ENCODE measurements at regions of chr19 and their contacts with region 1.

Region 1: DNA sequence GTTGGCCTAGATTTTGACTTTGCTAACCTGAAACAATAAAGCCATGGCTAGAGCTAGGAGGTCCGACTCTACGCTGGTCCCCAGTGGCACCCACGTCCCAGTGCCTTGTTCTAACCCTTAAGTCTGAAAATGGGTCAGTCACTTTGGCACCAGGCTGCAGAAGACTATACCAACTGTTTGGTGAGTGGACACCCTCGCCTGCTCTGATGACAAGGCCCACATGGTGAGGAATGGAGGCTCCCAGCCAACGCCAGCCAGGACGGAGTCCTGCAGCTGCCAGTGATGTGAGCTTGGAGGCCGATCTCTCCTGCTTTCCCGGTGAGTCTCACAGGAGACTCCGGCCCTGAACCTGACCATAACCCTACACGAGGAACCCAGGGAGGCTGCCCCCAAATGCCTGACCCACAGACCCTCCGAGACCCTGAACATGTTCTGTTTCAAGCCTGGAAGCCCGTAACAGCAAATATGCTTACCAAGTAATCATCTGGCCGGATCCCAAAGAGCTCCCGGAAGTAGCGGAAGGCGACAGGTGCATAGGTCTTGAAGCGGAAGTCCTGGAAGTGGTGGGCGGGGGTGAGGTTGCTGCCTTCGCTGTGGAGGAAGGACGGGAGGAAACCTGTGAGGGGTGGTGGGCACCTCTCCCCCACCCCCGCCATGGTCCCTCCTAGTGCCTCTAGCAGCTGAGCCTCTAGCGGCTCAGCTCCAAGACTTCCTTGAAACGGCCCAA is 34.1 kb upstream of the CACTIN start:
- DNase-seq: no peak
- H3K4me3 ChIP-seq: no peak overlapping the region
- H3K27ac ChIP-seq: no peak overlapping the region
- H3K4me1 ChIP-seq: peaks cover 0 to 2% of the 10 kb centered on the region in 2 donors
- H3K27me3 ChIP-seq: no peaks in the 10 kb centered on the region
- CTCF ChIP-seq: no peak
- POLR2A ChIP-seq: no peak

Region 2: DNA sequence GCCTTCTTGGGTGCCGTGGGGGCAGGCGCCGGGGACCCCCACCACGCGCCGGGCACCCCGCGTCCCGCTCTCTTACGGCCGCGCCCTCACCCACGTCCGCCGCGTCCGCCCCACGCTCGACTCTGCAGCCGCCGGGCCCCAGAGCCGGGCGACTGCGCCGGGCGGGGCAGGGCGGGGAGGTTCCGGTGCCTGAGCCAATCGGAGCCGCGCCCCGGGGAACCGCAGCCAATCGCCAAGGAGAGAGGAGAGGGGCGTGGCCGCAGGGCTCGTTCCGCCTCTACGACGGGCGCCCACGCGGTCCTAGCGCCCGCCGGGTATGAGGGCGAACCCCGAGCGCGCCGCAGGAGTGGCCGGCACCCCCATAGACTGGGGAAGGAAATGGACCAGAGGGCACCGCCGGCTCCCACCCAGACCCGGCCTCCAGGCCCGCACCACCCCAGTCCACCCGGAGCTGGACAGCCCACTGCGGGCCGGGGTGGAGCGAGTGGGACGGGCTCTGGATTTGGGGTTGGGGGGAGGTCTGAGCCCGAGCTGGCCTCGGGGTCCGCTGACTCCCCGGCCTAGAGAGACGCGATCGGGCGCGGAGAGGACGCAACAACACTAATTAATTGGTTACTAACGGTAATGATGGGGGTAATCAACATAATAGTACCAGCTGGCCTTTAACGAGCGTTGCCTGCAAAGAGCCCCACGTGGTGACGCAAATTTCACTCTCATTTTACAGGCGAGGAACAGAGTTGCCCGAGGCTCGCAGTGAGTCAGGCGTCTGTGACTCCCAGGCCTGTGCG is 103.0 kb before region 1 on chr19 and contains the start of gene MFSD12:
- intact Hi-C with region 1: no loop called
- DNase-seq: peak; percentile 95
- H3K4me3 ChIP-seq: peak within 1 kb of the TSS; percentile 74 to 86 (median 76)
- H3K27ac ChIP-seq: peak within 1 kb of the TSS; percentile 46 to 65 (median 55)
- H3K4me1 ChIP-seq: peaks cover 7 to 20% of the 10 kb centered on the region in 2 donors
- H3K27me3 ChIP-seq: no peaks in the 10 kb centered on the region
- CTCF ChIP-seq: no peak
- POLR2A ChIP-seq: peak in 1 of 2 donors; percentile 85
- total RNA-seq, gene MFSD12: 36.4 to 90.9 (median 66.7) TPM

Region 3: DNA sequence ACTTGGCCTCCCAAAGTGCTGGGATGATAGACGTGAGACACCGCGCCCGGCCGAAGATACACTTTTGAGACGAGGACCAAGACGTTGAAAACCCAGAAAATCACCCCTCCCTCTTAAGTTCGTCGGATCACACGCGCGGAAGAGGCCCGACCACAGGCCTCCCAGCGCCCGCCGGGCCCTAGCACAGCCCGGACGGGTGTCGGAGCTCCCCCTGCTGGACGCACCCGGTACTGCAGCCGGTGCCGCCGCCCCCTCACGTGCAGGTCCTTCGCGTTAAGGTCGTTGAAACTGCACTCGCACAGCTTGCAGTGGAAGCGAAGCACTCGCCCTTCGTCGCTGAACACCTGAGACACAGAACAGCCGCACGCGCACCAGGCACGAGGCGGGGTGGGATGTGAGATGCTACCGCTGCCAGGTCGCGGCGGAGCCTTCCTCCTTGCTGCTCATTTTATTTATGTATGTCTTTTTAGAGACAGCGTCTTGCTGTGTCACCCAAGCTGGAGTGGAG is 161.3 kb after region 1 on chr19:
- intact Hi-C with region 1: loop called (anchors 5 kb)
- DNase-seq: peak; percentile 50 to 55
- H3K4me3 ChIP-seq: no peak overlapping the region
- H3K27ac ChIP-seq: no peak overlapping the region
- H3K4me1 ChIP-seq: no peaks in the 10 kb centered on the region
- H3K27me3 ChIP-seq: no peaks in the 10 kb centered on the region
- CTCF ChIP-seq: peak; percentile 78 to 99 (median 92)
- POLR2A ChIP-seq: no peak